ENCODE measurements at regions of chr20 and their contacts with region 1.

Region 1: DNA sequence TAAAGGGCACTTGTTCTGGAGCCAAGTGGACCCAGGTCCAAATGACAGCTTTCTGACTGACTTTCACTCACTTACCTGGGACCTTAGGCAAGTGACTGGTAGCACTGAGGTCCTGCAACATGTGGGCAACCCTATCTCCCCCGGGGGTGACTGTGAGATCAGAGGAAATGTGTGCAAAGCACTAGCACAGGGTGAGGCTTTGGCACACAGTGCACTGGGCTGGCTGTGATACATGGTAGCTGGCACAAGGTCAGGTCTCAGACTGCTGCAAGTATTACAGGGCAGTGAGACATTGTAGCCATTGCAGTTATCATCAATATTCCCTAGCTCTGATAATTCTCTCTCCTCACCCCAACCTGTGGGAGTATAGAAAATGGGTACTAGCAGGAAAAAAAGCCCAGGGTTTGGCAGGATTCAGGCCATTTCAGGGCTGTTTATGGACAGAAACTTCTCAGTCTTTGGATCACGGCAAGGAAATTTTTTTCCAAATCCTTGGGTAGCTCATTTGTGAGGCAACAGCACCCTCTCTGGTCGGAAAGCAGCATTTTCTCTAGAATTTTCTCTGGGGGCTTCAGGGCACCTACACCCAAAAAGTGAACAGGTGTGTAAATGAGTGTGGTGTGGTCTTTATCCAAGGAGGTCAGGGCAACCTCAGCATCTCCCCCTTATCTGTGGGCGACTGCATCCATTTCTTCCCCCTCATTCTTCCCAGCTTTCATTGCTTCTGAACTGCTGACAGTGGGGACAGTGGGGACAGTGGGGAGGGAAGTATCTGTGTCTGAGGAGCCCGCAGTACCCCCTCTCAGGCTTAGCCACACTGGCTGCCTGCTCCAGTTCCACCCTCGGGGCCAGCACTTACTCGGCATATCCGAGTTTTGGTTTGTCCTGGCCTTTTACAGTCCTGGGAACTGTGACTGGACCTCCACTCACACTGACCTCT is 148.7 kb upstream of the PHACTR3 start:
- DNase-seq: peak; percentile 77
- H3K4me3 ChIP-seq: peak overlapping the region in 1 of 2 experiments; percentile 48; a peak in 1 of 4 replicates
- H3K27ac ChIP-seq: peak overlapping the region in 1 of 2 experiments; percentile 74; a peak in 2 of 4 replicates
- H3K4me1 ChIP-seq: peaks cover 0 to 24% of the 10 kb centered on the region in 2 experiments; a peak in 1 of 4 replicates
- H3K27me3 ChIP-seq: no peaks in the 10 kb centered on the region
- CTCF ChIP-seq: peak; percentile 81
- EP300 ChIP-seq: no peak
- RAD21 ChIP-seq: peak; percentile 89

Region 2: DNA sequence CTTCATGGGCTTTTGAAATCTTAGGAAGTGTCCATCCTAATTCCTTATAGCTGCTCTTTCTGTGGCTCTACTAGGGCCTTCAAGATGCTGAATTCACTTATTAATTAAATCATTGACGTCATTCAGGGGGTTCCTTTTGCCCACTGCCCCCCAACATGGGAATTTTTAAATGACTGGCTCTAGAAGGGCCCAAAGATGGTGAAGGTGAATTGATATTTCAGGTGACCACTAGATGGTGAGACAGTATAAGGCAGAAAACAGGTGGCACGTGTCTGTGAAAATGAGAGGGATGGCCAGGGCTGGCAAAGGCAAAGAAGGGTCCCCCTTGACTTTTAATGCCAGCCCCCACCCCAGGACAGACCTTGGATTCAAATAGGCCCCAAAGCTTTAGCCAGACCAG is 591.3 kb before region 1 on chr20:
- CTCF ChIA-PET with region 1: interaction called, 66 read pairs
- POLR2A ChIA-PET with region 1: no interaction called
- DNase-seq: peak; percentile 49
- H3K4me3 ChIP-seq: no peak overlapping the region
- H3K27ac ChIP-seq: no peak overlapping the region
- H3K4me1 ChIP-seq: no peaks in the 10 kb centered on the region
- H3K27me3 ChIP-seq: no peaks in the 10 kb centered on the region
- CTCF ChIP-seq: peak; percentile 27
- EP300 ChIP-seq: no peak
- RAD21 ChIP-seq: peak; percentile 77

Region 3: GRCh38 chr20:58875541-58876134 is 580.0 kb before region 1 on chr20:
- CTCF ChIA-PET with region 1: interaction called, 41 read pairs
- POLR2A ChIA-PET with region 1: no interaction called
- DNase-seq: no peak
- H3K4me3 ChIP-seq: no peak overlapping the region
- H3K27ac ChIP-seq: peak overlapping the region; percentile 24 to 75
- H3K4me1 ChIP-seq: peaks cover 0 to 55% of the 10 kb centered on the region in 2 experiments; a peak in 3 of 4 replicates
- H3K27me3 ChIP-seq: no peaks in the 10 kb centered on the region
- CTCF ChIP-seq: no peak
- EP300 ChIP-seq: no peak
- RAD21 ChIP-seq: no peak

Region 4: GRCh38 chr20:59412875-59413284 is 42.8 kb before region 1 on chr20:
- CTCF ChIA-PET with region 1: interaction called, 64 read pairs
- POLR2A ChIA-PET with region 1: interaction called, 3 read pairs
- DNase-seq: peak; percentile 46
- H3K4me3 ChIP-seq: no peak overlapping the region
- H3K27ac ChIP-seq: peak overlapping the region in 1 of 2 experiments; percentile 80; a peak in 2 of 4 replicates
- H3K4me1 ChIP-seq: peaks cover 0 to 27% of the 10 kb centered on the region in 2 experiments; a peak in 1 of 4 replicates
- H3K27me3 ChIP-seq: 0 out of 2 replicates have a peak, but pooled peaks cover 7% of the 10 kb centered on the region
- CTCF ChIP-seq: no peak
- EP300 ChIP-seq: no peak
- RAD21 ChIP-seq: peak; percentile 64

Region 5: GRCh38 chr20:59469267-59470252 is 13.9 kb after region 1 on chr20:
- CTCF ChIA-PET with region 1: interaction called, 28 read pairs
- POLR2A ChIA-PET with region 1: no interaction called
- DNase-seq: no peak
- H3K4me3 ChIP-seq: no peak overlapping the region
- H3K27ac ChIP-seq: no peak overlapping the region
- H3K4me1 ChIP-seq: peaks cover 0 to 13% of the 10 kb centered on the region in 2 experiments; a peak in 1 of 4 replicates
- H3K27me3 ChIP-seq: peaks cover 5% of the 10 kb centered on the region; the same call in 1 of the 2 replicates
- CTCF ChIP-seq: no peak
- EP300 ChIP-seq: no peak
- RAD21 ChIP-seq: no peak

Region 6: DNA sequence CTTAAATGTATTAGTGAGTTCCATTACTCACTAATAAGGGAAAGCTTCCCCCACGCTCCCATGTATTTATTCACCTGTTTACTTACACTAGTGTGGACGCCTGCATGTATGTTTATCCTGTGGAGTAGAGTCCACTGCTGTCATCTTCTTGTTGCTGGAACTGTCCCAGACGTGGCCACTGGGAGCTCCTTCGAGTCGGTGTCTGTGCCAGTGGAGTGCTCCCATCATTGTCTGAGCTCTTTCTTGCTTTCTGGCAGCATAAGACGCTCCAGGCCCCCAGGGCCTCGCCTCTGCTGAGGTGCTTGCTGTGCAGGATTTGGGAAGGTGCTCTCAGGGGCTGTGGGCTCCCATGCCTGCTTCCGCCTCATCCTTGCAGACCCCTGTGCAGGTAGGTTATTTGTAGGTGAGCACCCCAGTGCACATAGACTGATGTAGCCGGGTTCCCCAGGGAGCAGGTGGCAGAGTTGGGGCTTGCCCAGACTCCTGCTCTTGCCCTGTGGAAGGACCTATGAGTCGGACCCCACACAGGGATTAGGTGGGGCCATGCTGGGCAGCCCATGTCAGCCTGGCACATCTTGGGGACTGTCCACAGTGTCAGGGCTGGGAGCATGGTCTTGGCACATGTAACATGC is 165.3 kb after region 1 on chr20:
- CTCF ChIA-PET with region 1: no interaction called
- POLR2A ChIA-PET with region 1: no interaction called
- DNase-seq: no peak
- H3K4me3 ChIP-seq: no peak overlapping the region
- H3K27ac ChIP-seq: no peak overlapping the region
- H3K4me1 ChIP-seq: peaks cover 0 to 6% of the 10 kb centered on the region in 2 experiments; a peak in 1 of 4 replicates
- H3K27me3 ChIP-seq: no peaks in the 10 kb centered on the region
- CTCF ChIP-seq: no peak
- EP300 ChIP-seq: no peak
- RAD21 ChIP-seq: no peak

Measured in SK-N-SH (cell line).